Endothelial cell of umbilical vein (primary cell): ENCODE measurements at regions of chr6 and their contacts with region 1.

Region 1: DNA sequence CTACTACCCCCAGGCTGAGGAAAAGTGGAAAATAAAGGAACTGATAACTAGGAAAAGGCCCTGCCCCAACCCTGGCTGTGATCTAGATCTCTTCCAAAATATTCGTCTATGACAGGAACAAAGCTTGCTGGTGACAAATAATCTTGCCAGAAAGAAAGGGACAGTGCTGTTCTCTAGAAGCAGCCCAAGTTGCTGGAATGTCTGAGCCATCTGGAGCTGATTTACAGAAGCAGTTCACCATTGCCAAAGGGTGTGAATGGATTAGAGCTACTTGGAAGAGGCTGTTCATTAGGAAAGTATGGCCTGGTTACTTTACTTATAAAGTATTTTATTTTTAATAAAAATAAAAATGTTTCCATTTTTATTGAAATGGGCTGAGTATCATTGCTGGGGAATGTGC is 146.3 kb downstream of the EPM2A start:
- DNase-seq: no peak
- H3K4me3 ChIP-seq: no peak overlapping the region
- H3K27ac ChIP-seq: no peak overlapping the region
- H3K4me1 ChIP-seq: peaks cover 3% of the 10 kb centered on the region
- H3K27me3 ChIP-seq: no peaks in the 10 kb centered on the region
- CTCF ChIP-seq: no peak
- POLR2A ChIP-seq: no peak

Region 2: DNA sequence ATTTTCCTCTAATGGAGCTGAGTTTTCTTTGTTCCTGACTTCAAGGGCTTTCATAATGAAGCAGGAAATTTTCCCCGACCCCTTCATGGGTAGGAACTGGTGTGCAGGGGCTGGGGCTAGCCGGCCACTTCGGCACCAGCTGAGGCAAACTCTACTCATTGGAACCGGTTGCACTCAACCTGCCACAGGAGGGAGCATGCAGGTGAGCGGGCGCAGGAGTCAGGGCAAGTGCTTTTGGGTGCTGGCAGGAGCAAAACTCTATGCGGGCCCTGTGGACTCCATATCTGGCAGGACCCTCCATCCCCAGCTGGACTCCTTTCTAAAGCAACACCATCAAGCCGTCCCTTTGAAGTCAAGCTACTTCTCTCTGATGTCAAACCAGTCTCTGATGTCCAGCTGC is 97.9 kb before region 1 on chr6:
- CTCF ChIA-PET with region 1: no interaction called
- POLR2A ChIA-PET with region 1: no interaction called
- dilution Hi-C with region 1: no loop called
- intact Hi-C with region 1: no loop called
- DNase-seq: no peak
- H3K4me3 ChIP-seq: no peak overlapping the region
- H3K27ac ChIP-seq: no peak overlapping the region
- H3K4me1 ChIP-seq: no peaks in the 10 kb centered on the region
- H3K27me3 ChIP-seq: no peaks in the 10 kb centered on the region
- CTCF ChIP-seq: no peak
- POLR2A ChIP-seq: no peak

Region 3: DNA sequence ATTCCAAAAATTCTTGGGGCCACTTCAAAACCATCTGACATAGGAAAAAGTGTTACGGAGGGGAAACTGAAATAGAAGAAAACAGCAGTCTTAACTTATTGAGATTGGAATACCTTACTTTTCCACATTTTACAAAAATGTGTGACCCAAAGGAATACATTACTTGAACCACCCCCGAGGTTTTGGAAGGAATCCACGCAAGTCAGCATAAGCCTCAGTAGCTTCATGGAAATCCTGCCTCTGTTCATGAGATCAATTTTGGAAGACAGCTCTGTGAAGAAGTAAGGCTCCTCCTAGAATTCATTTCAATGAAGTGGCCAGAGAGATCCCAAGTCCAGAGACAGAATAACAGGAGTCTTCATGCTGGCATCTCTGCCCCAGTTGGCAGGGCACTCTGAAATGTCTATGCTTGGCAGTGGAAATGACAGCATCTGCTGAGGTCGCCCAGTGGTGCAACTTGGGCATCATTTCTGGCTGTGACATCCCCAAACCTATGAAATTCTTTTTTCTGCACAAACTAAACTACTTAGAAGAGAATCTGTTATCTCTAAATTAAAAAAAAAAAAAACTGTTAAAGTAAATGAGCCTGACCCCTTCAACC is 13.8 kb after region 1 on chr6:
- CTCF ChIA-PET with region 1: interaction called, 17 read pairs
- POLR2A ChIA-PET with region 1: no interaction called
- dilution Hi-C with region 1: no loop called
- intact Hi-C with region 1: no loop called
- DNase-seq: no peak
- H3K4me3 ChIP-seq: no peak overlapping the region
- H3K27ac ChIP-seq: no peak overlapping the region
- H3K4me1 ChIP-seq: no peaks in the 10 kb centered on the region
- H3K27me3 ChIP-seq: no peaks in the 10 kb centered on the region
- CTCF ChIP-seq: no peak
- POLR2A ChIP-seq: no peak

Region 4: GRCh38 chr6:145643760-145644159 is 54.8 kb after region 1 on chr6:
- CTCF ChIA-PET with region 1: no interaction called
- POLR2A ChIA-PET with region 1: no interaction called
- dilution Hi-C with region 1: no loop called
- intact Hi-C with region 1: no loop called
- DNase-seq: no peak
- H3K4me3 ChIP-seq: no peak overlapping the region
- H3K27ac ChIP-seq: no peak overlapping the region
- H3K4me1 ChIP-seq: no peaks in the 10 kb centered on the region
- H3K27me3 ChIP-seq: no peaks in the 10 kb centered on the region
- CTCF ChIP-seq: no peak
- POLR2A ChIP-seq: no peak

Region 5: GRCh38 chr6:145744619-145745018 is 155.6 kb after region 1 on chr6:
- CTCF ChIA-PET with region 1: no interaction called
- POLR2A ChIA-PET with region 1: no interaction called
- dilution Hi-C with region 1: no loop called
- intact Hi-C with region 1: no loop called
- DNase-seq: no peak
- H3K4me3 ChIP-seq: no peak overlapping the region
- H3K27ac ChIP-seq: no peak overlapping the region
- H3K4me1 ChIP-seq: no peaks in the 10 kb centered on the region
- H3K27me3 ChIP-seq: no peaks in the 10 kb centered on the region
- CTCF ChIP-seq: no peak
- POLR2A ChIP-seq: no peak